Endothelial cell of umbilical vein (primary cell): ENCODE measurements at regions of chr1 and their contacts with region 1.

Region 1: DNA sequence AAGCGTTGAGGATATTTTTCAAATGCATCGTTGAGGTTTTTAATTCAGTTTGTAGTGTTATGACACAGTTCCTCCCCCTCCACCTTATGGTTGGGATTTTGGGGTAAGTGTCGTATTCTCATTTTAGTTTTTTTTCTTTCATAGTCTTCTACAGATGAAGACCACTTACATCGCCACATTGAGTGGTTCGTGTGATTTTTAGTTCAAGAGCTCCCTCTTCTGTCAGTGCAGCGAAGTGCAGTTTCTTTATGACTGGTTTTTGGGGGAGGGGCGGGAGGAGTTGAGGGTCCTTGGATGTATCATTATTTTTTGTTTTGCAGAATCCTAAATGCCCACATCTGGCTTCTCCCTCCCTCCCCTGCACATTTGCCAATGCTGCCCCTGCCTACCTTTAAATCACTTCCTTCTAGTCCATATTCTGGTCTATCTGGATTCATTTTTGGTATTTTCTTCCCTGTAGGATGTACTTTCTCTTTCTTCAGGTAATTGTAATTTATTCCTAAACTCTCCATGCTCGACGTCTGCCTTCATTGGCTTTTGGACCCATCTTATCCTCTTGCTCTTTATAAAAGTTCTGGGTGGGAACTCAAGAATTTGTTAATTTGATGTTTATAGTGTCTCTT is 433.1 kb downstream of the CAMTA1 start:
- DNase-seq: peak; percentile 62
- H3K4me3 ChIP-seq: no peak overlapping the region
- H3K27ac ChIP-seq: no peak overlapping the region
- H3K4me1 ChIP-seq: no peaks in the 10 kb centered on the region
- H3K27me3 ChIP-seq: no peaks in the 10 kb centered on the region
- CTCF ChIP-seq: peak; percentile 66 to 74
- POLR2A ChIP-seq: no peak

Region 2: DNA sequence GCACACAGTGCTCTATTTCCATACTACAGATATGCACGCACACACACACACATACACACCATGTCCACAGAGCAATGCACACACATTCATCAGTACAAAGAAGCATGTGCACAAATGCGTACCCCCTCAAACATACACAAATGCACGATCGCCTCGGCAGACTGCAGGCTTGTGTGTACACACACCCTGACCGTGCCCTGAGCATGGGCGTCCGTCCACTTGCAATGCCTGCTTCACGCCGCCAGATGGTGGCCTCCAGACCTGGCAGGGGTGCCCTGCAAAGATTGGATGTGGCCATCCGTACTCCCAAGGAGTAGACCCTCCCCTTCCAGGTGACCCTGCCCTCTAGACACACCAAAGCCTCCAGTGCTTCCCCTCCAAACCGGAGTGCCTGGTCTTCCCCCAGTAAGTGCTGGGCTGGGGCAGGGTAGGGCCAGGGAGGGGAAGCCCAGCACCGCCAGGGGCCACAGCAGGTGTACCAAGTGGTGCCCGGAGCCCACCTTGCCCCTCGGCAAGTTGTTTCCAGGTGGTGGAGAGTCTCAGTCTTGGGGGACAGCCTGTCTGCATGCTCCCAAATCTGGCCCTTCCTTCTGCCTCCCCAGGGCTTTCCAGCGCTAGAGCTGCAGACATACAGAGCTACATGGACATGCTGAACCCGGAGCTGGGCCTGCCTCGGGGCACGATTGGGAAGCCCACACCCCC is 773.1 kb before region 1 on chr1:
- CTCF ChIA-PET with region 1: no interaction called
- POLR2A ChIA-PET with region 1: no interaction called
- dilution Hi-C with region 1: no loop called
- intact Hi-C with region 1: loop called (anchors 1 kb)
- DNase-seq: peak; percentile 35
- H3K4me3 ChIP-seq: no peak overlapping the region
- H3K27ac ChIP-seq: no peak overlapping the region
- H3K4me1 ChIP-seq: no peaks in the 10 kb centered on the region
- H3K27me3 ChIP-seq: peaks cover 32 to 34% of the 10 kb centered on the region in 2 experiments
- CTCF ChIP-seq: peak; percentile 38 to 69
- POLR2A ChIP-seq: no peak

Region 3: GRCh38 chr1:6646499-6647148 is 571.7 kb before region 1 on chr1:
- CTCF ChIA-PET with region 1: no interaction called
- POLR2A ChIA-PET with region 1: no interaction called
- dilution Hi-C with region 1: no loop called
- intact Hi-C with region 1: loop called (anchors 1 kb)
- DNase-seq: peak; percentile 47
- H3K4me3 ChIP-seq: no peak overlapping the region
- H3K27ac ChIP-seq: no peak overlapping the region
- H3K4me1 ChIP-seq: no peaks in the 10 kb centered on the region
- H3K27me3 ChIP-seq: no peaks in the 10 kb centered on the region
- CTCF ChIP-seq: peak; percentile 50 to 57
- POLR2A ChIP-seq: no peak

Region 4: GRCh38 chr1:7177438-7178146 is 40.7 kb before region 1 on chr1:
- CTCF ChIA-PET with region 1: no interaction called
- POLR2A ChIA-PET with region 1: no interaction called
- dilution Hi-C with region 1: no loop called
- intact Hi-C with region 1: no loop called
- DNase-seq: no peak
- H3K4me3 ChIP-seq: no peak overlapping the region
- H3K27ac ChIP-seq: no peak overlapping the region
- H3K4me1 ChIP-seq: no peaks in the 10 kb centered on the region
- H3K27me3 ChIP-seq: no peaks in the 10 kb centered on the region
- CTCF ChIP-seq: no peak
- POLR2A ChIP-seq: no peak